Colonic mucosa (tissue), 4 donors: ENCODE measurements at regions of chr9 and their contacts with region 1.

Region 1: DNA sequence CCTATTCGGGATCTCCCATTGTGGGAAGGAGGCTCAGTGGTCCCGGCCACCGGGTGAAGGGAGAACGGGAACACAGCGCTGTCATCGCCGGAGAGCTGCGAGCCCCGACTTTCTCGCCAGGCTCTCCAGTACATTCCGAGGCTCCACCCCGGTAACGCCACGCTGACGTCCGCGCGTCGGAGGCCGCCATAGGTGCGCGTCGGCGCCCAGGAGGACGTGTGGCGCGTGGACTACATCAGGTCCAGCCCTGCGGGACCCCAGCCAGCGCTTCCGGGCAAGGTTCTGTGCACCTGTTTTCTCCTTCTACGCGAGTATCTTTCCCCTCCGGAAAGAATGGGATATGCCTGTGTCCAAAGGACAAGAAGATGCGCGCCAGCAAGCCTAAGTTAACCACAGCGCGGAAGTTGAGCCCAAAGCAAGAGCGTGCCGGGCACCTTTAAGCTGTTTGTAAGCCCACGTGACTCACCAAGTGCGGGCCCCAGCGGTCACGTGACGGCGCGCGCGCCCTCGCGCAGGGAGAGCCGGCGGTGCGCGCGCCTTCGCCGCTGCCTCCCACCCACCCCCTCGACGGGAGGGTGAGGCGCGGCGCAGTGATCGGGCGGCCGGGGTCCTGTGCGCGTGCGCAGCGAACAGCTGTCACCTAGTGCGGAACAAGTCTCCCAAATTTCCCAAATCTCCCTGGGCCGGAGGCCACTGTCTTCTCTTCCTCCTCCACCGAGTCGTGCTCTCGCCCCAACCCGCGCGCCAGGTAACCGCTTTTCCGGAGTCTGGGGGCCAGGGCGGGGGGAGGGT is at the start of gene KDM4C:
- DNase-seq: peak; percentile 96
- H3K4me3 ChIP-seq: peak within 1 kb of the TSS; percentile 72
- H3K27ac ChIP-seq: peak within 1 kb of the TSS; percentile 87
- H3K4me1 ChIP-seq: no peaks in the 10 kb centered on the region
- H3K27me3 ChIP-seq: no peaks in the 10 kb centered on the region
- CTCF ChIP-seq: no peak
- total RNA-seq, gene KDM4C: 37.3 to 42.0 TPM

Region 2: GRCh38 chr9:5652821-5653220 is 1104.8 kb before region 1 on chr9:
- intact Hi-C with region 1: no loop called
- DNase-seq: no peak
- H3K4me3 ChIP-seq: no peak overlapping the region
- H3K27ac ChIP-seq: no peak overlapping the region
- H3K4me1 ChIP-seq: no peaks in the 10 kb centered on the region
- H3K27me3 ChIP-seq: no peaks in the 10 kb centered on the region
- CTCF ChIP-seq: no peak

Region 3: DNA sequence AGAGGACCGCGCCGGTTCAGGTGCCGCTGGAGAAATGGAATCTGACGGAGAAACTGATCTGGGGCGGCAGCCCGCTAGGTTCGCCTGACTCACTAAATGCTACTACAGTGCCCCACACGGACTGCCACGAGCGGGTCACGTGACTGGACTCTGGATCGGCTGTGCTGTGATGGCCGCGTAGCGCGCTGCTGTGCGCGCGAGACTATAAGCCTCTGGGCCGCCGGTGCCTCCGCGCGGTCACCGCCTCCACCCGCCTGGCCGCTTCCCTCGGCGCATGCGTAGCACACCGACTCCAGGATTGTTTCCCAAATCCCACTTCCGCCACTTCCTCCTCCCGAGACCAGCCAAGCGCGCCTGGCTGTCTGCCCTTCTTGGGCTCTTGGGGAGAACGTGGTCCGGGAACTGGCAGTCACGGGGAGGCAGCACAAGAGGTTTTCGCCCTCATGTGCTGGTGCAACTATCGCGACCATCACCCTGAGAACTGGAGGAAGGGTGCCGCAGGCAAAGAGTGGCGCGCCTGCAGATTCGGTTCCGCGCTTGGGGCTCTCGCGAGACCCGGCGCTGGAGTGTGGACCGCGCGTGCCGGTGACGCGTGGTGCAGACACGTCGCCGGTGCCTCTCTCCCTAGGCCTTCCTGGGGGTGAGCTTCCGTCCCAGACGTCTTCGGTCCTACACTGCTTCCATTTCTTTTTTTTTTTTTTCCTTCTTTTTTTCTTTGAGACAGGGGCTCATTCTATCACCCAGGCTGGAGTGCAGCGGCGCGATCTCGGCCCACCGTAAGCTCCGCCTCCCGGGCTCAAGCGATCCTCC is 76.3 kb before region 1 on chr9:
- intact Hi-C with region 1: loop called (anchors 5 kb)
- DNase-seq: peak; percentile 96
- H3K4me3 ChIP-seq: peak overlapping the region; percentile 42
- H3K27ac ChIP-seq: peak overlapping the region; percentile 97
- H3K4me1 ChIP-seq: no peaks in the 10 kb centered on the region
- H3K27me3 ChIP-seq: no peaks in the 10 kb centered on the region
- CTCF ChIP-seq: no peak